ENCODE measurements at regions of chr22 and their contacts with region 1.

Region 1: GRCh38 chr22:29245637-29246385 is 22.0 kb downstream of the RHBDD3 start:
- H3K4me3 ChIP-seq: no peak overlapping the region
- H3K27ac ChIP-seq: no peak overlapping the region
- H3K4me1 ChIP-seq: no peaks in the 10 kb centered on the region
- CTCF ChIP-seq: peak; percentile 92

Region 2: DNA sequence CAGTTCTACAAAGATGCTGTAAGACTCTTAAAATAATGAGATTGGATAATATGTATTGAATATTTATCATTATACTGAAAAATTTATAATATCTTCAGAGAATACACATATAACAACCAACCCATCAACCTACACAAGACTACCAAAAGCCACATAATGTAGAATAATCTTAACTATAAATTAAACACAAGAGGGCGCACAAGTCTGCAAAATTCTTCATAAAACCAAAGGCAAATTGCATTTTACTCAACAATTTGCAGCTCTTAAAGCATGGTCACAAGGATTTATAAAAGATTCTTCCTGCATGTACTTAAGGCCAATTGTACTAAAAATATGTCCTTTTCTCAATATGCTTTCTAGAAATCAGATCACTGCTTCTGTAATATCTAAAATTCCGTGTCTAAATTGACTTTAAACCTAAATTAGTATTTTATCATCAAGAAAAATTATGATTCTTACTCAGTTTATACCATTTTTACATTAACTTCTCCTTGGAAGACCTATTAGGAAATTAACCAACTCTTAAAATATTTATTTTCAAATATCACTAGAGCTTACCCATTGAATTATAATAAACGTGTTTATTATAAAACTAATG is 645.2 kb before region 1 on chr22:
- CTCF ChIA-PET with region 1: interaction called, 11 read pairs
- POLR2A ChIA-PET with region 1: no interaction called
- H3K4me3 ChIP-seq: no peak overlapping the region
- H3K27ac ChIP-seq: no peak overlapping the region
- H3K4me1 ChIP-seq: no peaks in the 10 kb centered on the region
- CTCF ChIP-seq: no peak

Region 3: GRCh38 chr22:29004647-29005371 is 241.0 kb before region 1 on chr22:
- CTCF ChIA-PET with region 1: no interaction called
- POLR2A ChIA-PET with region 1: no interaction called
- H3K4me3 ChIP-seq: no peak overlapping the region
- H3K27ac ChIP-seq: peak overlapping the region; percentile 63
- H3K4me1 ChIP-seq: peaks cover 12% of the 10 kb centered on the region
- CTCF ChIP-seq: no peak

Region 4: DNA sequence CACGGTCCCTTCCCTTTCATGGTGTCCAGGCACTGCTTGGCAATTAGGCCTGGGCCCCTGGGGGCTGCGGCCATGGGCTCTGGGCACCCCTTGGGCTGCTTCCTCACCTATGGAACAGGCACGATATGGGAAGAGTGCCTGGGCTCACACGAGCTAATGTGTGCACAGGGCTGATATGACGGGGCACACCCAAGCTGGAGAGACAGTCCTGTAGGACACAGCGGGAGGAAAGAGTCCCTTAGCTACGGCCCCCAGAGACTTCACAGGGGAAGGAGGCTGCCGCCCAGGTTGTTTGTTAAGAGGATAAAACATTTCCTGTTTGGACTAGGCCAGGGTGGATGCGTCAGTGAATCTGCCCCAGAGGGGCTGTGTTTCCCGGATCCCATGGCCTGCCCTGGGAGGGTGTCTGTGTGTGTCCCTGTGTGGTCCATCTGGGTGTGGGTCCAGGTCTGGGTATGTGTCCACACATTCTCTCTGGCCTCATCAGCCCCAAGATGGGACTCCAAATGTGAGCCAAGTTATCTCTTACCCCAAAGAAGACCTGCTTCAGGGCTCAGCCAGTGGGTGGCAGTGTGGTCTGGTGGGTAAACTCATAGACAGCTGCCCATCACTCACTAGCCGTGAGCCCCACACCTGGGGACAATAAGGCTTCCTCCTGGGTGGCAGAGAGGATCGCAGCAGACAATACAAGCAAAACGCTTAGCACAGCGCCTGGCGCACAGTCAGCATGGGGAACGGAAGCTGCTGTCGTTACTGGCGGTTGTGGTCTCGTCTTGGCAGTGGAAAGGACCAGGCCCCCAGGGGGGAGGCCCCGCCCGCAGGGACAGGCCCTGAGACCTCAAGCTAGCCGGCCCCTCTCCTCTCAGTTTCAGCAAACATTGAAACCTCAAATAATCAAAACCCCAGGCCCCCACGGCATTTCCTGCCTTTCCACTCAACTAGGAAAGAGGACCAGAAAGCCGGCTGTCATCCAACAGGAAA is 43.3 kb before region 1 on chr22:
- CTCF ChIA-PET with region 1: interaction called, 44 read pairs
- POLR2A ChIA-PET with region 1: no interaction called
- H3K4me3 ChIP-seq: no peak overlapping the region
- H3K27ac ChIP-seq: no peak overlapping the region
- H3K4me1 ChIP-seq: no peaks in the 10 kb centered on the region
- CTCF ChIP-seq: no peak

Region 5: DNA sequence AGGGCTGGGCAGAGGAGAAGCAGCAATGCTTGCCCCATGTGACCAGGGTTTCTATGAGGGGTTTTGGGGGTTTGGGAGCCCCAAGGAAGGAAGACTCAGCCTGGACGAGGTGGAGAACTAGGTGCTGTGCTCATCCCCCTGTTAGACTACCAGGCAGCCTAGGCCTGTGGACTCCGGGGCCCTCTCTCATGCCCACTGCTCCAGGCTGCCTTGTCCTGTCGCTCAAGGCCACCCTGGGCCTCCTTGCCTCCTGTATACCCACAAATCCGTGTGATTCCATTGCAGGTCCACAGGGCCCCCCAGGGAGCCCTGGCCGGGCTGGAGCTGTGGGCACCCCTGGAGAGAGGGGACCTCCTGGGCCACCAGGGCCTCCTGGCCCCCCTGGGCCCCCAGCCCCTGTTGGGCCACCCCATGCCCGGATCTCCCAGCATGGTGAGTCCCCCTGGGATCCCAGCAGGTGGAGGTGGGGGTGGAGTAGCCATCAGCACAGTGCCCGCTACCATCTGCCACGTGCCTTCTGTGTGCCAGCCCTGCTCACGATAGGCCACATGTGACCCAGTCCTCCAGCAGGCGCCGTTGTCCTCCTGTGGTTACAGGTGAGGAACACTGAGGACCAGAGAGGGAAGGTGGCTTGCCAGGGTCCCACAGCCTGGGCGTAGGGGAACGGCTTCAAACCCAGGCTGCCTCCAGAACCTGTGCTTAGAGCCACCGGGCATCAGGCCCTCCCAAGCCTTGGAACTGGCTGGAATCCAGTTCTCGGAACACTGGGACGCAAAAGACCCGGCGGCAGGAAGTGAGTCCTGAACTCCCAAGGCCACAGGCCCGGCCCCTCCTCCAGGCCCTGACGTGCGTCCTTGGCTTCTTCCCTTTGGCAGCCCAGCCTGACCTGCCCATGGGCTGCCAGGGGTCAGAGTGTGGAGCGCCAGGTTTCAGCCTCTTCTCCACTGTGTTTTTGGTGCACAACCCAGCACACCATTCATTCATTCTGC is 13.5 kb before region 1 on chr22:
- CTCF ChIA-PET with region 1: interaction called, 16 read pairs
- POLR2A ChIA-PET with region 1: no interaction called
- H3K4me3 ChIP-seq: no peak overlapping the region
- H3K27ac ChIP-seq: no peak overlapping the region
- H3K4me1 ChIP-seq: no peaks in the 10 kb centered on the region
- CTCF ChIP-seq: no peak

Region 6: DNA sequence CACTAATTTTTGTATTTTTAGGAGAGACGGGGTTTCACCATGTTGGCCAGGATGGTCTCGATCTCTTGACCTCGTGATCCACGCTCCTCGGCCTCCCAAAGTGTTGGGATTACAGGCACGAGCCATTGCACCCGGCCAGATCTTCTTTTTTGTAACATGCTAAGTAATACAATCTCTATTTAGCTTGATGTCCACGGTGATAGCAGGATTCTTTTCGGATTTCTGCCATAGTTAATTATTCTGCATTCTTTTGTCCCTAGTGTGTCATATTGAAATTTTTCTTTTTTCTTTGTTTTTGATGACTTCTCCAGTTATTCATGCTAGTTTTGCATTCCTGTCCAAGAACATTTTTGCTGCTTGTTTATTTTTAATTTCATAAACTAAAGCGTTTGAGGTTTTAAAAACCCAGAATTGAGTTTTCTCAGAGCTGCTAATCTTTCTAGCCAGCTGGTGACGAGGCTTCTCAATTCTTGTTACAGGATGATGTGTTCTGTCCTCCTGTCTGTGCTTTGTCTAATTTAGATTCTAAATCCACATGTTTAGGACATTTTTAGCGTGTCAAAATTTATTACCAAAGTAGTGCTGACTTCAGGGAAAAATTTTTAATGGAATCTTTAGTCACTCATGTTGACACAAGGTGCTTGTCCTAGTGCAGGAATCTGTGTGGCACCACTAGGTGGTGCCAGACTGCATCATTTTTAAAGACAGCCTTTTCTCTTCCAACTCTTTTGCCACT is 379.4 kb after region 1 on chr22:
- CTCF ChIA-PET with region 1: interaction called, 10 read pairs
- POLR2A ChIA-PET with region 1: no interaction called
- H3K4me3 ChIP-seq: no peak overlapping the region
- H3K27ac ChIP-seq: no peak overlapping the region
- H3K4me1 ChIP-seq: peaks cover 44% of the 10 kb centered on the region
- CTCF ChIP-seq: no peak